CD4-positive, alpha-beta T cell (primary cell): ENCODE measurements at regions of chr5 and their contacts with region 1.

Region 1: GRCh38 chr5:42908509-42909488 is 97.1 kb upstream of the SELENOP start:
- DNase-seq: peak; percentile 80 to 96 (median 90)
- ATAC-seq: peak; percentile 94
- H3K4me3 ChIP-seq: peak overlapping the region; percentile 68
- H3K4me3 Mint-ChIP-seq: peak overlapping the region; percentile 93
- H3K27ac ChIP-seq: no peak overlapping the region
- H3K27ac Mint-ChIP-seq: peak overlapping the region; percentile 91
- H3K4me1 ChIP-seq: peaks cover 12% of the 10 kb centered on the region
- H3K4me1 Mint-ChIP-seq: peaks cover 24% of the 10 kb centered on the region
- H3K27me3 ChIP-seq: peaks cover 4 to 16% of the 10 kb centered on the region in 2 experiments
- H3K27me3 Mint-ChIP-seq: peaks cover 15% of the 10 kb centered on the region
- CTCF ChIP-seq: peak; percentile 89

Region 2: GRCh38 chr5:42950440-42951292 is 41.9 kb after region 1 on chr5:
- CTCF ChIA-PET with region 1: interaction called, 58 read pairs
- POLR2A ChIA-PET with region 1: interaction called, 67 read pairs
- intact Hi-C with region 1: loop called (anchors 1 to 2 kb)
- DNase-seq: peak; percentile 35 to 90 (median 61)
- ATAC-seq: peak; percentile 41
- H3K4me3 ChIP-seq: peak overlapping the region; percentile 75
- H3K4me3 Mint-ChIP-seq: peak overlapping the region; percentile 98
- H3K27ac ChIP-seq: peak overlapping the region; percentile 96 to 98
- H3K27ac Mint-ChIP-seq: peak overlapping the region; percentile 99
- H3K4me1 ChIP-seq: peaks cover 45% of the 10 kb centered on the region
- H3K4me1 Mint-ChIP-seq: peaks cover 30% of the 10 kb centered on the region
- H3K27me3 ChIP-seq: no peaks in the 10 kb centered on the region
- H3K27me3 Mint-ChIP-seq: no peaks in the 10 kb centered on the region
- CTCF ChIP-seq: no peak

Region 3: GRCh38 chr5:42989190-42989589 is 80.4 kb after region 1 on chr5:
- CTCF ChIA-PET with region 1: interaction called, 37 read pairs
- POLR2A ChIA-PET with region 1: interaction called, 174 read pairs
- intact Hi-C with region 1: loop called in 1 of 2 experiments (anchors 2 kb)
- DNase-seq: peak in 3 of 14 experiments; percentile 47 to 57 (median 50)
- ATAC-seq: no peak
- H3K4me3 ChIP-seq: peak overlapping the region; percentile 80
- H3K4me3 Mint-ChIP-seq: peak overlapping the region; percentile 76
- H3K27ac ChIP-seq: peak overlapping the region in 1 of 2 donors; percentile 93
- H3K27ac Mint-ChIP-seq: peak overlapping the region; percentile 99
- H3K4me1 ChIP-seq: peaks cover 59% of the 10 kb centered on the region
- H3K4me1 Mint-ChIP-seq: peaks cover 76% of the 10 kb centered on the region
- H3K27me3 ChIP-seq: no peaks in the 10 kb centered on the region
- H3K27me3 Mint-ChIP-seq: peaks cover 9% of the 10 kb centered on the region
- CTCF ChIP-seq: no peak

Region 4: DNA sequence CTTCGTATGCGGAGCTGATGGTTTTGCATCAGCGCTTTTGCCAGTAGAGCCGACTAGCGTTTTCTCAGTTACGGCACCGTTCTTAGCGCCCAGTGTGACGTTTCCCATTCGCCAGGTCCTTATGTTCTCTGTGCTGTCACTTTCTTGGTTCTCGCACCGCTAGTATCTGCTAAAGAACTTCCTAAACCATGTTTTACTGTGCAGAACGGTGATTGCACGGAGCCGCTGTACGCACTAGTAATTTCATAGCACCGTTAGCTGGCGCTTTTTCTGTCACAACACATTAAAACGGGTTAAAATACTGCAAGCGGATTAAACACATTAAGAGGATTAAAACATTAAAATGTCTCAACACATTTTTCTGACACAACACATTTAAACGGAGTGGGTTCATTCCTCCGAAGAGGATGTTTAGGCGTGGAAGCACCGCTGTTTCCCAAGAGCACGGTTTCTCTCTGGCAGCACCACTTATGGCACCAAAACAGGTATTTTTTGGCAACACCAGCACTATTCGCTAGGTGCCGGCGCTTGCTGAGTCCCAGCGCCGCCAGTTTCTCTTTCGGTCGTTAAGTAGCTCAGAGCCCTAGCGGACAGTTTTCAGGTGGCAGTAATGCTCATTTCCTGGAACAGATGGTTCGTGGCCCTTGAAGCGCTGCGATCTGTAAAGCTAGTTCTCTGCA is 111.0 kb after region 1 on chr5:
- CTCF ChIA-PET with region 1: interaction called, 16 read pairs
- POLR2A ChIA-PET with region 1: interaction called, 128 read pairs
- intact Hi-C with region 1: no loop called
- DNase-seq: peak; percentile 73 to 97 (median 84)
- ATAC-seq: peak; percentile 61
- H3K4me3 ChIP-seq: peak overlapping the region; percentile 80
- H3K4me3 Mint-ChIP-seq: peak overlapping the region; percentile 99
- H3K27ac ChIP-seq: peak overlapping the region; percentile 98
- H3K27ac Mint-ChIP-seq: peak overlapping the region; percentile 100
- H3K4me1 ChIP-seq: peaks cover 42% of the 10 kb centered on the region
- H3K4me1 Mint-ChIP-seq: peaks cover 57% of the 10 kb centered on the region
- H3K27me3 ChIP-seq: no peaks in the 10 kb centered on the region
- H3K27me3 Mint-ChIP-seq: no peaks in the 10 kb centered on the region
- CTCF ChIP-seq: peak; percentile 69

Region 5: DNA sequence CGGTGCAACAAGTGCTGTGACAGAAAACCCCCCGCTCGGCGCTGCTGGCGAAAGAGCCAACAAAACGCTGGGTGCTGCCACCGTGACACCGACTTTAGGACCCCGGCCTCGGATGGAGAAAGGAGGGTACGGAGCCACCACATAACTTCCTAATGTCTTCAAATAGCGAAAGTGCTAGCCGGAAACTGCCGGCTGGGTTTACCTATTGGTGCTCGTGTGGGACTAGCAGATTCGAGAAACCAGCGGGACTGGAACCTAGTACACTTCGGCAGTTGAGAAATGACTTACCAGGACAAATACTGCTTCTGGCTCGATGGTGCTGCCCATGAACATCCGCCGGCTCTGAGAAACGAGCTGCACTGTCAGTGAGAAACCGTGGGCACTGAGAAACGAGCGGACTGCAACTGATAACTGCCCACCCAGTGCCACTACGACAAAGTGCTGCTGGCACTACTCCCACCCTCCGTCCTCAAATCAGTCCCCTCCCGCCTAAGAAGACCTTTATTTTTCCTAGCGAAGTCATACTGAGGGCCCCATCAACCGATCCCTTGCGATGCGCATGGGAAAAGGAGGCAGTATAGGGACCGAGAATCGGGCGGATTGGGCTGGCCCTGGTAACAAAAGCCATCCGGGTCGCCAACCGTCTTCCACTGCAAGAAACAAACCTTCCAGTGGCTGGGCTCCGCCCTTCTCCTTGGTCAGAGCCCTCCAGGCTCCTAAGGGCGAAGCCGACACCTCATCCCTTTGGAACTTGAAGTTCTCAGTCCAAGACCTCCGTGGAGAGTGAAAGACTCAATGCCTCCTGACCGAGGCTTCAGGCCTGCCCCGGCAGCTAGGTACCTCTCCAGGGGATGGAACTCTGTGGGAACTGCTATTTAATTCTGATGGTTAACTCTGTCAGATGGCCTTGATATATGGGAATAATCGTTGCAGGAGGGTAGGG is 158.3 kb after region 1 on chr5:
- CTCF ChIA-PET with region 1: interaction called, 14 read pairs
- POLR2A ChIA-PET with region 1: interaction called, 92 read pairs
- intact Hi-C with region 1: loop called (anchors 2 to 5 kb)
- DNase-seq: peak; percentile 84 to 94 (median 90)
- ATAC-seq: peak; percentile 45
- H3K4me3 ChIP-seq: peak overlapping the region; percentile 78
- H3K4me3 Mint-ChIP-seq: peak overlapping the region; percentile 97
- H3K27ac ChIP-seq: peak overlapping the region; percentile 97 to 98
- H3K27ac Mint-ChIP-seq: peak overlapping the region; percentile 96
- H3K4me1 ChIP-seq: peaks cover 55% of the 10 kb centered on the region
- H3K4me1 Mint-ChIP-seq: peaks cover 49% of the 10 kb centered on the region
- H3K27me3 ChIP-seq: no peaks in the 10 kb centered on the region
- H3K27me3 Mint-ChIP-seq: no peaks in the 10 kb centered on the region
- CTCF ChIP-seq: no peak

Region 6: DNA sequence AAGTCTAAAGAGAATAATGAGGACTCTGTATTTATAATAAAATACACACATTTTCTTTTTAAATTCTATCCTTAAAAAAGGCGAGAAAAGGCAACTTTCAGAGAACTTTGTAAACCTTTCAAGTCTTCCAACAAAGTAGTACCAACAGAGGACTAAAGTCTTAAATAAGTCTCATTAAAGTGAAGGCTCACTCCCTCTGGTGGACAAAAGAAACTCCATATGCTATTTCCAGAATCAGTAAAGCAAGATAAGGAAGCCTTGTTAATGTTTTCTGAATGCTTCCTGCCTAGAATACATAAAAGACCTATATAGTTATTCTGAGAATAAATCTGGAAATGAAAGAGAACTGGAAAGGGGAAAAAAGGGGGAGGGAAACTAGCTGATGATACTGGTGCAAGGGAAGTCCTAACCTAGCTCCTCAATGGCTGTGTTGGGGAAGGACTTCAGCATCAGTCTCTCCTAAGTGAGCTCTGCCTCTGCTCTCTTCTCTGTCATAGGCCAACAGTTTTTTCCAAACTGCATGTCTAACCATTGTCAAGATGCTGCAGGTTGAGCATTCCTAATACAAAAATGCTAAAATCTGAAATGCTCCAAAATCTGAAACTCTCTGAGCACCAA is 397.3 kb after region 1 on chr5:
- CTCF ChIA-PET with region 1: interaction called, 4 read pairs
- POLR2A ChIA-PET with region 1: interaction called, 34 read pairs
- intact Hi-C with region 1: loop called (anchors 1 to 2 kb)
- DNase-seq: peak in 4 of 14 experiments; percentile 10 to 73 (median 70)
- ATAC-seq: peak; percentile 85
- H3K4me3 ChIP-seq: no peak overlapping the region
- H3K4me3 Mint-ChIP-seq: no peak overlapping the region
- H3K27ac ChIP-seq: no peak overlapping the region
- H3K27ac Mint-ChIP-seq: peak overlapping the region; percentile 24
- H3K4me1 ChIP-seq: peaks cover 7% of the 10 kb centered on the region
- H3K4me1 Mint-ChIP-seq: peaks cover 43% of the 10 kb centered on the region
- H3K27me3 ChIP-seq: no peaks in the 10 kb centered on the region
- H3K27me3 Mint-ChIP-seq: no peaks in the 10 kb centered on the region
- CTCF ChIP-seq: peak; percentile 71